ENCODE measurements at regions of chr3 and their contacts with region 1.

Region 1: DNA sequence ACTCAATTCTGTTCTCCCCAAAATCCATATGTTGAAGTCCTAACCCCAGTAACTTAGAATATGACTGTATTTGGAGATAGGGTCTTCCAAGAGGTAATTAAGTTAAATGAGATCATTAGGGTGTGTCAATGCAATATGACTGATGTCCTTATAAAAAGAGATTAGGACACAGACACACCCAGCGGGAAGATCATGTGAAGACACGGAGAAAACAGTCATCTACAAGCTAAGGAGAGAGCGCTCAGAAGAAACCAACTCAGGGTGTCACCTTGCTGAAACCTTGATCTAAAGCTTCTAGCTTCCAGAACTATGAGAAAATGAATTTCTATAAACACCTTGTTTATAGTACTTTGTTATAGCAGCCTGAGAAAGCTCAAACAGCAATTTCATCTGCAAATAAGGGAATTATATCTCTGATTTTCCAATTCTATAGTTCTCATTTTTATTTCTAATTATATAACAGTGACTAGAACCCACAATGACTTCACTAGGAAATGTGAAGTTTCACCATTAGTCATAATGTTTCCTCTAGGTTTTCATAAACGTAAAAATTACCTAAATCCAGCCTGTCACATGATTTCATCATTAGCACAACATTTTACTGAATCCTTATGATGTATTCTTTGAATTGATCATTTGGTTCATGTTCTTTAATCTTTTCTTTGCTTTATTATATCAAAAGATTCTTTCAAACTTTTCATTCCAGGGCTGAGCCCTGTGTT is 459.1 kb upstream of the MDFIC2 start:
- DNase-seq: no peak
- ATAC-seq: peak; percentile 70
- H3K4me3 Mint-ChIP-seq: no peak overlapping the region
- H3K27ac Mint-ChIP-seq: no peak overlapping the region
- H3K4me1 Mint-ChIP-seq: peaks cover 12% of the 10 kb centered on the region
- H3K27me3 Mint-ChIP-seq: peaks cover 43% of the 10 kb centered on the region

Region 2: DNA sequence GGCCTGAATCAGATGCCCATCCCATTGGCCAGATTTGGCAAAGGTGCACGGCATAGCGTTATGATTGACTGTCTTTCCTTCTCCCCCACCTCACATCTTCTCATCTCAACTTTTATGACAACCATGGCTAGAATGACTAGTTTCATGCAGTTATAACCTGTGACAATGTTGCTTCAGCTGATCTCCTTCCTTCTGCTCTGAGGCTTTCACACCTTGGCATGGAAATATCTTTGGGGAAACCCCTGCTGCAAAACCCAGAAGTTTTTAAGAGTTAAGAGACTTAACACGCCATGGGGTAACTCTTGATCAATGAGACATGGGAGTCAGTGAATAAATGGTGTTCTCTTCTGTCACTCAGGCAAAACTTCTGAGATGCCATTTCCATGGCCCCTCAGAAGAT is 168.5 kb before region 1 on chr3:
- CTCF ChIA-PET with region 1: no interaction called
- POLR2A ChIA-PET with region 1: no interaction called
- intact Hi-C with region 1: loop called in 1 of 2 experiments (anchors 5 kb)
- DNase-seq: peak; percentile 46
- ATAC-seq: peak; percentile 96
- H3K4me3 Mint-ChIP-seq: no peak overlapping the region
- H3K27ac Mint-ChIP-seq: no peak overlapping the region
- H3K4me1 Mint-ChIP-seq: peaks cover 8% of the 10 kb centered on the region
- H3K27me3 Mint-ChIP-seq: peaks cover 19% of the 10 kb centered on the region

Region 3: GRCh38 chr3:70640481-70640880 is 131.1 kb before region 1 on chr3:
- CTCF ChIA-PET with region 1: no interaction called
- POLR2A ChIA-PET with region 1: no interaction called
- intact Hi-C with region 1: no loop called
- DNase-seq: no peak
- ATAC-seq: no peak
- H3K4me3 Mint-ChIP-seq: no peak overlapping the region
- H3K27ac Mint-ChIP-seq: no peak overlapping the region
- H3K4me1 Mint-ChIP-seq: no peaks in the 10 kb centered on the region
- H3K27me3 Mint-ChIP-seq: peaks cover 29% of the 10 kb centered on the region

Region 4: GRCh38 chr3:70856414-70857162 is 85.0 kb after region 1 on chr3:
- CTCF ChIA-PET with region 1: no interaction called
- POLR2A ChIA-PET with region 1: no interaction called
- intact Hi-C with region 1: loop called (anchors 1 to 5 kb)
- DNase-seq: peak; percentile 8
- ATAC-seq: peak; percentile 84
- H3K4me3 Mint-ChIP-seq: no peak overlapping the region
- H3K27ac Mint-ChIP-seq: no peak overlapping the region
- H3K4me1 Mint-ChIP-seq: peaks cover 24% of the 10 kb centered on the region
- H3K27me3 Mint-ChIP-seq: peaks cover 33% of the 10 kb centered on the region